ENCODE measurements at regions of chr3 and their contacts with region 1.

Region 1: GRCh38 chr3:14439579-14440518 is 37.4 kb downstream of the SLC6A6 start:
- DNase-seq: peak; percentile 70 to 92 (median 90)
- H3K4me3 ChIP-seq: peak overlapping the region in 4 of 7 experiments; percentile 19 to 61 (median 40)
- H3K27ac ChIP-seq: no peak overlapping the region
- H3K4me1 ChIP-seq: peaks cover 13 to 67% (median 54%) of the 10 kb centered on the region in 4 experiments
- H3K27me3 ChIP-seq: no peaks in the 10 kb centered on the region

Region 2: GRCh38 chr3:14426063-14426620 is 13.7 kb before region 1 on chr3:
- CTCF ChIA-PET with region 1: interaction called, 27 read pairs
- POLR2A ChIA-PET with region 1: no interaction called
- DNase-seq: peak; percentile 41 to 79 (median 74)
- H3K4me3 ChIP-seq: peak overlapping the region in 2 of 7 experiments; percentile 4 to 8
- H3K27ac ChIP-seq: peak overlapping the region in 1 of 2 experiments; percentile 12
- H3K4me1 ChIP-seq: peaks cover 20 to 87% (median 83%) of the 10 kb centered on the region in 4 experiments
- H3K27me3 ChIP-seq: no peaks in the 10 kb centered on the region

Region 3: DNA sequence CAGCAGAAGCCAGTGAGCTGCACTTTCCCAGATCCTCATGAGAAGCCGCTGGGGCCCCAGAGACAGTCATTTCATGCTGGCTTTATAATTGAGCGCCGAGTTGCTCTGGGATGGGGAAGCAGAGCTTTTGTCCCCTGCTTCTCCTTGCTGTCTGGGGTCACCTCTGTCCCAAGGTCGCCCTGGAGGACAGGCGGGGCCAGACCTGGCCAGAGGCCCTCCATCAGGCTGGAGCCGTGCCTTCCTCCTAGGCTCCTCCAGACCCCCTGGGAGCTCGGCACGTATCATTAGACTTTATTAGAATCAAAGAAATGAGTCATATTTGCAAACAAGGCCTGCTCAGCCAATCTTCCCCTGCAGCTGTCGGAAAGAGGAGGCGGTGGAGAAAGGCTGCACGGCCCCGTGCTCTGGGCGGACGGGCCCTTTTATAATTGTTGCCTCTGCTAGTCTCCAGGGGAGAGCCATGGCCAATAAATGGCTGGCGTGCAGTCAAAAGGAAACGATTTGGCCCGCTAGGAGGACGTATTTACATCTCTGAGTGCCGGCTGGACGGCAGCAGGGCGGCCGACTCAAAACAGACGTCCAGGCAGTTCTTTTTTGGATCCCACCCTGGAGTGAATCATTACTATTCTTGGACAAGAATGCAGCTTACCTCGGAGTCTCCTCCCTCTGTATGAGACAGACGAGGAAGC is 13.0 kb after region 1 on chr3:
- CTCF ChIA-PET with region 1: interaction called, 39 read pairs
- POLR2A ChIA-PET with region 1: interaction called, 5 read pairs
- DNase-seq: no peak
- H3K4me3 ChIP-seq: no peak overlapping the region
- H3K27ac ChIP-seq: no peak overlapping the region
- H3K4me1 ChIP-seq: peaks cover 0 to 10% (median 3%) of the 10 kb centered on the region in 4 experiments
- H3K27me3 ChIP-seq: no peaks in the 10 kb centered on the region

Measured in common myeloid progenitor, CD34-positive (primary cell).